IMR-90 (cell line): ENCODE measurements at regions of chr5 and their contacts with region 1.

Region 1: GRCh38 chr5:129767906-129768380 is 20.0 kb downstream of the MINAR2 start:
- DNase-seq: peak; percentile 86
- ATAC-seq: peak; percentile 96
- H3K4me3 ChIP-seq: no peak overlapping the region
- H3K27ac ChIP-seq: no peak overlapping the region
- H3K4me1 ChIP-seq: no peaks in the 10 kb centered on the region
- H3K27me3 ChIP-seq: no peaks in the 10 kb centered on the region
- CTCF ChIP-seq: peak; percentile 100
- POLR2A ChIP-seq: no peak
- RAD21 ChIP-seq: peak; percentile 91

Region 2: DNA sequence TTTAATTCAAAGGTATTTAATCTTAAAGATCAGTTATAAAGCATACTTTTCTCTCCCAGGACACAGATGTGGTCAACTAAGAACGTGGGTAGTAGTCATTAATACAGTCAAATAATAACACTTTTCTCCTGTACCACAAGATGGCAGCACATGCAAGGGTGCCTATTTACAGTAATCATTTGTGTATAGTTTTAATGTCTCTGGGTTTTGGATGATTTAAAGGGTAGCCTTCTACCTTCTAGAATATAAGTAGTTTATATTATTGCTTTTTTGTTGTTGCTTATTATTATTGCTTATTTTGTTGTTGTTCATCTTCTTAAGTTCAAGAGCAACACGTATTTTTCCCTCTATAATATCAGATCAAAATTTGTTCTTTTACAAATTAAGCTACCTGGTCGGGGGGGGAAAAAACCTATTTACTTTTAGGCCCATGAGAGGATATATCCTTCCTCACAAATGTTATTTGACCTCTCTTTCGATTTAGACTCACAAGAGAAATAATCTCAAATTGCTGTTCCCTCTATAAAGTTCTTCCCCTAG is 862.3 kb before region 1 on chr5:
- CTCF ChIA-PET with region 1: interaction called, 3 read pairs
- POLR2A ChIA-PET with region 1: no interaction called
- dilution Hi-C with region 1: no loop called
- in situ Hi-C with region 1: loop called (anchors 10 kb)
- intact Hi-C with region 1: loop called (anchors 1 kb)
- DNase-seq: peak; percentile 58
- ATAC-seq: peak; percentile 89
- H3K4me3 ChIP-seq: no peak overlapping the region
- H3K27ac ChIP-seq: no peak overlapping the region
- H3K4me1 ChIP-seq: no peaks in the 10 kb centered on the region
- H3K27me3 ChIP-seq: no peaks in the 10 kb centered on the region
- CTCF ChIP-seq: peak; percentile 84
- POLR2A ChIP-seq: no peak
- RAD21 ChIP-seq: peak; percentile 78

Region 3: GRCh38 chr5:129172580-129172979 is 595.4 kb before region 1 on chr5:
- CTCF ChIA-PET with region 1: no interaction called
- POLR2A ChIA-PET with region 1: no interaction called
- dilution Hi-C with region 1: no loop called
- in situ Hi-C with region 1: no loop called
- intact Hi-C with region 1: loop called (anchors 2 kb)
- DNase-seq: no peak
- ATAC-seq: no peak
- H3K4me3 ChIP-seq: no peak overlapping the region
- H3K27ac ChIP-seq: no peak overlapping the region
- H3K4me1 ChIP-seq: no peaks in the 10 kb centered on the region
- H3K27me3 ChIP-seq: no peaks in the 10 kb centered on the region
- CTCF ChIP-seq: 0 out of 2 replicates have a peak, but pooled peaks have one; percentile 21
- POLR2A ChIP-seq: no peak
- RAD21 ChIP-seq: no peak

Region 4: DNA sequence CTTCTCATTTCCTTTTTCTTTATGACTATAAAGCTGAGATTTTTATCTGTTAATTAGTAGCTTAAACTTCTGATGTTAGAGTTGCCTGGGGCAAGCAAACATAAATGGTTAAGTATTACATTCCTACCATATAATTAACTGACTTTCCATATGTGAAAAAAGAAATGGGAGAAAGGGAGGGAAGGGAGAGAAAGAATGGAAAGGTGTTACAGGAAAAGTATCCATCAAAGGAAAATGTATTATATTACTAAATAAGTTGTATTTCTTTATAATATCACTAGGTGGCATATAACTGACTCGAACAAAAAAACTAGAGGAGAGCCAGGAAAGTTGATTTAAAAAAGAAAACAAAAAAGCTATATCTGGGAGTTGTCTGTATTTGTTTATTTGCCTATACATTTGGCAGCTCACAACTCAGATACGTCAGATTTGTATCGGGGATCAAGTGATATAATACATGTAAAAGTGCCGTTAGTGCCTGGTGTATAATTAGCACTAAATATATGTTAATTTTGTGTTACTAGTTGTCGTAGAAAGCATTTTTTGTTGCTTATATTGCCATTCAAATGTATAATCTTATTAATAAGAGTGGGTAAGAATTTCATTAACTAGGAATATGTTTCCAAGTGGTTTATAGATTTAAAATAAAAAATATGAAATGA is 367.5 kb before region 1 on chr5:
- CTCF ChIA-PET with region 1: no interaction called
- POLR2A ChIA-PET with region 1: no interaction called
- dilution Hi-C with region 1: no loop called
- in situ Hi-C with region 1: no loop called
- intact Hi-C with region 1: loop called (anchors 2 kb)
- DNase-seq: no peak
- ATAC-seq: peak; percentile 48
- H3K4me3 ChIP-seq: no peak overlapping the region
- H3K27ac ChIP-seq: no peak overlapping the region
- H3K4me1 ChIP-seq: no peaks in the 10 kb centered on the region
- H3K27me3 ChIP-seq: no peaks in the 10 kb centered on the region
- CTCF ChIP-seq: peak; percentile 24; the same call in 1 of the 2 replicates
- POLR2A ChIP-seq: no peak
- RAD21 ChIP-seq: no peak

Region 5: GRCh38 chr5:129413570-129413969 is 354.4 kb before region 1 on chr5:
- CTCF ChIA-PET with region 1: no interaction called
- POLR2A ChIA-PET with region 1: no interaction called
- dilution Hi-C with region 1: no loop called
- in situ Hi-C with region 1: no loop called
- intact Hi-C with region 1: no loop called
- DNase-seq: no peak
- ATAC-seq: no peak
- H3K4me3 ChIP-seq: no peak overlapping the region
- H3K27ac ChIP-seq: no peak overlapping the region
- H3K4me1 ChIP-seq: peaks cover 2% of the 10 kb centered on the region; the same call in 1 of the 2 replicates
- H3K27me3 ChIP-seq: no peaks in the 10 kb centered on the region
- CTCF ChIP-seq: no peak
- POLR2A ChIP-seq: no peak
- RAD21 ChIP-seq: no peak

Region 6: GRCh38 chr5:129541644-129542251 is 226.2 kb before region 1 on chr5:
- CTCF ChIA-PET with region 1: no interaction called
- POLR2A ChIA-PET with region 1: no interaction called
- dilution Hi-C with region 1: no loop called
- in situ Hi-C with region 1: no loop called
- intact Hi-C with region 1: loop called (anchors 5 kb)
- DNase-seq: peak; percentile 9
- ATAC-seq: peak; percentile 54; the same call in 1 of the 2 replicates
- H3K4me3 ChIP-seq: no peak overlapping the region
- H3K27ac ChIP-seq: no peak overlapping the region
- H3K4me1 ChIP-seq: no peaks in the 10 kb centered on the region
- H3K27me3 ChIP-seq: no peaks in the 10 kb centered on the region
- CTCF ChIP-seq: peak; percentile 25
- POLR2A ChIP-seq: no peak
- RAD21 ChIP-seq: no peak

Region 7: GRCh38 chr5:129852747-129853352 is 84.9 kb after region 1 on chr5:
- CTCF ChIA-PET with region 1: interaction called, 10 read pairs
- POLR2A ChIA-PET with region 1: no interaction called
- dilution Hi-C with region 1: no loop called
- in situ Hi-C with region 1: no loop called
- intact Hi-C with region 1: loop called (anchors 1 kb)
- DNase-seq: peak; percentile 55
- ATAC-seq: peak; percentile 91
- H3K4me3 ChIP-seq: no peak overlapping the region
- H3K27ac ChIP-seq: no peak overlapping the region
- H3K4me1 ChIP-seq: no peaks in the 10 kb centered on the region
- H3K27me3 ChIP-seq: no peaks in the 10 kb centered on the region
- CTCF ChIP-seq: peak; percentile 78
- POLR2A ChIP-seq: no peak
- RAD21 ChIP-seq: peak; percentile 58

Region 8: DNA sequence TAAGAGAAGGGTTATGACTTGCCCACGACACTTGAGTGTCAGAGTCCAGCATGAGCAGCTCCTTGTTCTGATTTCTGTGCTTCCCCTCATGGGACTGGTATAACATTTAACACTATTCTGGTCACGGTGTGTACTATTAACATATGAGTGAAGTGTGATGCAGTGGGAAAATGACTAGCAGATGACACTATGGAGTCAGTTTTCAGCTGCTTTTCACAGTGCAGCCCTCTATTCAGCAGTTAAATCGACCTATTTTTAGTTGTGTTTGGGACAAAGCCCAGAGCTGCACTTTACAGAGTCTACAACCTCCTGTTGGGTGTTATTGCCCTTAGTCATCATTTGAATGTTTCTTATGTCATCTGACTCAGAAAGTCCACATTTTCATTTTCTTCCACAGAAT is 195.4 kb after region 1 on chr5:
- CTCF ChIA-PET with region 1: no interaction called
- POLR2A ChIA-PET with region 1: no interaction called
- dilution Hi-C with region 1: no loop called
- in situ Hi-C with region 1: no loop called
- intact Hi-C with region 1: no loop called
- DNase-seq: peak; percentile 66
- ATAC-seq: peak; percentile 83
- H3K4me3 ChIP-seq: no peak overlapping the region
- H3K27ac ChIP-seq: no peak overlapping the region
- H3K4me1 ChIP-seq: no peaks in the 10 kb centered on the region
- H3K27me3 ChIP-seq: no peaks in the 10 kb centered on the region
- CTCF ChIP-seq: no peak
- POLR2A ChIP-seq: no peak
- RAD21 ChIP-seq: no peak

Region 9: GRCh38 chr5:131068893-131069643 is 1301.1 kb after region 1 on chr5:
- CTCF ChIA-PET with region 1: no interaction called
- POLR2A ChIA-PET with region 1: no interaction called
- dilution Hi-C with region 1: no loop called
- in situ Hi-C with region 1: no loop called
- intact Hi-C with region 1: no loop called
- DNase-seq: no peak
- ATAC-seq: no peak
- H3K4me3 ChIP-seq: no peak overlapping the region
- H3K27ac ChIP-seq: no peak overlapping the region
- H3K4me1 ChIP-seq: no peaks in the 10 kb centered on the region
- H3K27me3 ChIP-seq: no peaks in the 10 kb centered on the region
- CTCF ChIP-seq: no peak
- POLR2A ChIP-seq: no peak
- RAD21 ChIP-seq: no peak